ENCODE measurements at regions of chr1 and their contacts with region 1.

Region 1: DNA sequence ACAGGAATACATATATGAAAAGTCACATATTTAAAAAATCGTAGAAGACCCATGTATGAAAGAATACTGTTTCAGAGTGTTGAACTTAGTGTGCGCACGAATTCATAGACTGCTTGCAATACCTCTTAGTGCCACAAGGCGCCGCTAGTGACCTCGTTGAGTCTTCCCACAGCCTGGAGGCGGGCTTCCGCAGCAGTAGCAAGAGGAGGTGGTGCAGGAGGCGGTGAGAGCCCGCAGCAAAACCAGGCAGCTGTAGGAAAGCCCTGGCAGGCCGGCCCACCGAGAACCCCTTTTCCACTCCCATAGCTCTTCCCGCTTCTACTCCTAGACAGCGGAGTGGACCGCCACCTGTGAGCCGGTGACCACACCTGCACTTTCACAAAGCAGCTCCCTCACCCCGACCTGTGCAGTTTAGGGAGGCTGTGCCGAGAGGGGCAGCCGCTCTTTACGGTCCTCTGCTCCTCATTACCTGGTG is 23.5 kb downstream of the MTARC1 start:
- DNase-seq: peak; percentile 78
- ATAC-seq: peak; percentile 93
- H3K4me3 Mint-ChIP-seq: peak overlapping the region; percentile 62
- H3K27ac Mint-ChIP-seq: no peak overlapping the region
- H3K4me1 Mint-ChIP-seq: peaks cover 20% of the 10 kb centered on the region
- H3K27me3 Mint-ChIP-seq: no peaks in the 10 kb centered on the region; the same call in 1 of the 2 replicates
- CTCF ChIP-seq: peak; percentile 89

Region 2: GRCh38 chr1:220748089-220748934 is 61.9 kb before region 1 on chr1 and contains the start of gene MTARC2:
- CTCF ChIA-PET with region 1: no interaction called
- POLR2A ChIA-PET with region 1: no interaction called
- DNase-seq: peak; percentile 81
- ATAC-seq: peak; percentile 92
- H3K4me3 Mint-ChIP-seq: peak within 1 kb of the TSS; percentile 88
- H3K27ac Mint-ChIP-seq: peak within 1 kb of the TSS; percentile 91
- H3K4me1 Mint-ChIP-seq: peaks cover 49% of the 10 kb centered on the region
- H3K27me3 Mint-ChIP-seq: peaks cover 43% of the 10 kb centered on the region
- CTCF ChIP-seq: no peak
- total RNA-seq, gene MTARC2: 12.5 to 15.5 TPM (median 15.2 TPM) in 3 replicates

Region 3: DNA sequence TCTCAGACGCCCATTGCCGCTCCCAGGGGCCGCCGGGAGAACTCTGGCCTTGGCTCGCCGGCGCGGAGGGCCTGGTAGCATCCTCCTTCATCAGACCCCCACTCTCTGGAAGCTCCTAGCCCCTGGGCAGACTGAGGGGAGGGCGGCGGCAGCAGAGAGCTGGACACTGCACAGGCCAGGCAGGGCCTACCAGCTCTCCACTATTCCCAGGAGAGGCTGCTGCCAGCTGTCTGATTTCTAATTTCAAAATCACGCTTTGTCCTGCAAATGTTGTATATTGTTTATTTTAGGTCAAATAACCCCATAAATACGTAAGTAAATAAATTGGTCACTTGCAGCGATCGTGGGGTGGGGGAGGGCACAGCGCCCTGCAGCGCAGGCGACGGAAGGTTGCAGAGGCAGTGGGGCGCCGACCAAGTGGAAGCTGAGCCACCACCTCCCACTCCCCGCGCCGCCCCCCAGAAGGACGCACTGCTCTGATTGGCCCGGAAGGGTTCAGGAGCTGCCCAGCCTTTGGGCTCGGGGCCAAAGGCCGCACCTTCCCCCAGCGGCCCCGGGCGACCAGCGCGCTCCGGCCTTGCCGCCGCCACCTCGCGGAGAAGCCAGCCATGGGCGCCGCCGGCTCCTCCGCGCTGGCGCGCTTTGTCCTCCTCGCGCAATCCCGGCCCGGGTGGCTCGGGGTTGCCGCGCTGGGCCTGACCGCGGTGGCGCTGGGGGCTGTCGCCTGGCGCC is 23.7 kb before region 1 on chr1 and contains the start of gene MTARC1:
- CTCF ChIA-PET with region 1: interaction called, 18 read pairs
- POLR2A ChIA-PET with region 1: interaction called, 4 read pairs
- DNase-seq: peak; percentile 80
- ATAC-seq: peak; percentile 92
- H3K4me3 Mint-ChIP-seq: peak within 1 kb of the TSS; percentile 80
- H3K27ac Mint-ChIP-seq: peak within 1 kb of the TSS; percentile 36
- H3K4me1 Mint-ChIP-seq: peaks cover 26% of the 10 kb centered on the region
- H3K27me3 Mint-ChIP-seq: peaks cover 3% of the 10 kb centered on the region; the same call in 1 of the 2 replicates
- CTCF ChIP-seq: no peak
- total RNA-seq, gene MTARC1: 25.8 to 33.6 TPM (median 29.5 TPM) in 3 replicates

Region 4: GRCh38 chr1:220824031-220824989 is 14.1 kb after region 1 on chr1:
- CTCF ChIA-PET with region 1: interaction called, 10 read pairs
- POLR2A ChIA-PET with region 1: no interaction called
- DNase-seq: no peak
- ATAC-seq: no peak; the same call in 1 of the 2 replicates
- H3K4me3 Mint-ChIP-seq: no peak overlapping the region
- H3K27ac Mint-ChIP-seq: no peak overlapping the region
- H3K4me1 Mint-ChIP-seq: peaks cover 21% of the 10 kb centered on the region
- H3K27me3 Mint-ChIP-seq: no peaks in the 10 kb centered on the region
- CTCF ChIP-seq: no peak

Region 5: GRCh38 chr1:220841293-220841692 is 31.1 kb after region 1 on chr1:
- CTCF ChIA-PET with region 1: interaction called, 12 read pairs
- POLR2A ChIA-PET with region 1: no interaction called
- DNase-seq: no peak
- ATAC-seq: peak; percentile 74
- H3K4me3 Mint-ChIP-seq: no peak overlapping the region
- H3K27ac Mint-ChIP-seq: no peak overlapping the region
- H3K4me1 Mint-ChIP-seq: 0 out of 2 replicates have a peak, but pooled peaks cover 4% of the 10 kb centered on the region
- H3K27me3 Mint-ChIP-seq: no peaks in the 10 kb centered on the region
- CTCF ChIP-seq: no peak